SK-N-SH (cell line): ENCODE measurements at regions of chr7 and their contacts with region 1.

Region 1: GRCh38 chr7:149005241-149006050 is 22.9 kb downstream of the PDIA4 start:
- DNase-seq: peak; percentile 91
- H3K4me3 ChIP-seq: no peak overlapping the region
- H3K27ac ChIP-seq: no peak overlapping the region
- H3K4me1 ChIP-seq: peaks cover 0 to 7% of the 10 kb centered on the region in 2 experiments; a peak in 1 of 4 replicates
- H3K27me3 ChIP-seq: no peaks in the 10 kb centered on the region
- CTCF ChIP-seq: peak; percentile 97
- EP300 ChIP-seq: no peak
- RAD21 ChIP-seq: peak; percentile 71

Region 2: DNA sequence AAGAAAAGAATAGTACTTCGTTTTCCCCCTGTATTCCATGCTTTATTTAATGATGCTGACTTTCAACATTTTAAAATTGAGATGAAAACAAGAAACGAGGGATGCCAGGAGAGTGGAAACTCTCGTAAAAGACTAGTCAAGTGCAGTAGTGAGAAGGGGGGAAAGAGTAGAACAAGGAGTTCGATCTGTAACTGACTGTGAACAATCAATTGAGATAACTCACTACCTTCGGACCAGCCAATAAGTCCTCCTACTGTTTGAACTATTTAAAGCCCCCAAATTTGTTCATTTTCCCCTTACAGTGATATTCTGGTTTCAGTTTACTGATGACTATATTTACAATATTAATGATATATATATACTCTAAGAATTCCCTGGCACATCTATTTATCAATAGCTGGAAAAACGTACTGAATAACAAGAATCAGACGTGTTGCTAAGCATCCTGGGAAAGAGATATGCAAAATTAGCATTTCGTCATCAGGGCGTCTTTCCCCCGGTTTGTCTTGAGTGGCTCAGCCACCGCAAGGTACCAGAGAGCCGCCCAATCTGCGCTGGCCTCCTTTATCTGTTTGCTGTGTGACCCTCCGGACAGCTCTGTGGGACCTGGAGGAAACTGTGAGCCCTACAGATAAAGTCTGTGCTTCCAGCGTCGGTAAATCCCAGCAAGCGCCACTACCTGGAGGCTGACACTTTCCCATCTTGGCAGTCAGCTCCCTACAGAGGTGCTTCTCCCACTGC is 18.3 kb before region 1 on chr7:
- CTCF ChIA-PET with region 1: interaction called, 34 read pairs
- POLR2A ChIA-PET with region 1: interaction called, 6 read pairs
- DNase-seq: peak; percentile 94
- H3K4me3 ChIP-seq: peak overlapping the region; percentile 79 to 89
- H3K27ac ChIP-seq: peak overlapping the region; percentile 75 to 83
- H3K4me1 ChIP-seq: peaks cover 6 to 12% of the 10 kb centered on the region in 2 experiments; a peak in 2 of 4 replicates
- H3K27me3 ChIP-seq: no peaks in the 10 kb centered on the region
- CTCF ChIP-seq: 0 out of 2 replicates have a peak, but pooled peaks have one; percentile 9
- EP300 ChIP-seq: no peak
- RAD21 ChIP-seq: no peak

Region 3: GRCh38 chr7:148994601-148995000 is 10.8 kb before region 1 on chr7:
- CTCF ChIA-PET with region 1: interaction called, 34 read pairs
- POLR2A ChIA-PET with region 1: no interaction called
- DNase-seq: no peak
- H3K4me3 ChIP-seq: no peak overlapping the region
- H3K27ac ChIP-seq: no peak overlapping the region
- H3K4me1 ChIP-seq: no peaks in the 10 kb centered on the region; a peak in 1 of 4 replicates
- H3K27me3 ChIP-seq: no peaks in the 10 kb centered on the region
- CTCF ChIP-seq: no peak
- EP300 ChIP-seq: no peak
- RAD21 ChIP-seq: no peak

Region 4: GRCh38 chr7:149021725-149022062 is 16.2 kb after region 1 on chr7:
- CTCF ChIA-PET with region 1: interaction called, 72 read pairs
- POLR2A ChIA-PET with region 1: interaction called, 3 read pairs
- DNase-seq: no peak
- H3K4me3 ChIP-seq: no peak overlapping the region
- H3K27ac ChIP-seq: no peak overlapping the region
- H3K4me1 ChIP-seq: peaks cover 2 to 13% of the 10 kb centered on the region in 2 experiments; a peak in 3 of 4 replicates
- H3K27me3 ChIP-seq: no peaks in the 10 kb centered on the region
- CTCF ChIP-seq: no peak
- EP300 ChIP-seq: no peak
- RAD21 ChIP-seq: no peak

Region 5: GRCh38 chr7:149028346-149029109 is 23.1 kb after region 1 on chr7 and contains the start of gene PDIA4:
- CTCF ChIA-PET with region 1: interaction called, 72 read pairs
- POLR2A ChIA-PET with region 1: interaction called, 3 read pairs
- DNase-seq: peak; percentile 100
- H3K4me3 ChIP-seq: peak within 1 kb of the TSS; percentile 85 to 97
- H3K27ac ChIP-seq: peak within 1 kb of the TSS; percentile 82 to 92
- H3K4me1 ChIP-seq: peaks cover 5 to 17% of the 10 kb centered on the region in 2 experiments; a peak in 3 of 4 replicates
- H3K27me3 ChIP-seq: no peaks in the 10 kb centered on the region
- CTCF ChIP-seq: peak; percentile 36
- EP300 ChIP-seq: peak in 1 of 2 experiments; percentile 51; a peak in 2 of 4 replicates
- RAD21 ChIP-seq: peak; percentile 11; the same call in 1 of the 2 replicates
- polyA plus RNA-seq, gene PDIA4: 393 and 400 TPM in 2 replicates

Region 6: DNA sequence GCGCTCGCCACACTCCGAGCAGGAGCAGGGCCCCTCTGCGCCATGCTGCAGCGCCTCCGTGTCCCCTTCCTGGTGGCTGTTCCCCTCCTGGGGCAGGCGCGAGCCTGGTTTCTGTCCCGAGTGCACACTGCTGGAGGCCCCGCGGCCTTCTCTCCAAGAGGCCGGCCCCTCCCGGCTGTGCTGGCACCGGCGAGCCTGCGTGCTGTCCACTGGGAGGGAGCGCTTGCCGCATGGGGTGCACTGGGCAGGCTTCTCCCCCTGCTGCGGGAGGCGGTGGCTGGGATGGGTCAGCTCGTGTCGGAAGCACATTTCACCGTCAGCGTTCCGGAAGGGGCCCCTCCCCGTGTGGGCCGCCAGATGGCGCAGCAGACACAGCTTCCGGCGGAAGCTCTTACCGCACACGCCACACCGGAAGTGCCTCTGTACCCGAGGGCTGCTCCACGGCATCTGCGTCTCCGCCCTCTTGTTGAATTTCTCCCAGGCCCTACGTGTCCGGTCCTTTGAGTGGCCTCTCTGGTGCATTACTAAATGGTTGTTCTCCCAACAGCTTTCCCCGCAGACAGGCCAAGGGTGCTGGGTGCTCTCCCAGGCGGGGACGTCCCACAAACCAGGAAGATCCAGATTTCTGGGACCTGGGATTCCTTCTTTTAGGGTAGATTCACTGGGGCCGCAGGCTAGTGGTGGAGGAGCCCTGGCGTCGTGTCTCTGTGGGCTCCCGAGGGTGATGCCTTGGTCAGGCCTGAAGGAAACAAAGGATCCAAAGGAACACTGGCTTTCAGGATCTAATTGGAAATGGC is 66.4 kb after region 1 on chr7:
- CTCF ChIA-PET with region 1: interaction called, 113 read pairs
- POLR2A ChIA-PET with region 1: interaction called, 3 read pairs
- DNase-seq: peak; percentile 61
- H3K4me3 ChIP-seq: no peak overlapping the region
- H3K27ac ChIP-seq: no peak overlapping the region
- H3K4me1 ChIP-seq: no peaks in the 10 kb centered on the region
- H3K27me3 ChIP-seq: no peaks in the 10 kb centered on the region
- CTCF ChIP-seq: no peak
- EP300 ChIP-seq: no peak
- RAD21 ChIP-seq: 0 out of 2 replicates have a peak, but pooled peaks have one; percentile 39